ENCODE measurements at regions of chr17 and their contacts with region 1.

Region 1: DNA sequence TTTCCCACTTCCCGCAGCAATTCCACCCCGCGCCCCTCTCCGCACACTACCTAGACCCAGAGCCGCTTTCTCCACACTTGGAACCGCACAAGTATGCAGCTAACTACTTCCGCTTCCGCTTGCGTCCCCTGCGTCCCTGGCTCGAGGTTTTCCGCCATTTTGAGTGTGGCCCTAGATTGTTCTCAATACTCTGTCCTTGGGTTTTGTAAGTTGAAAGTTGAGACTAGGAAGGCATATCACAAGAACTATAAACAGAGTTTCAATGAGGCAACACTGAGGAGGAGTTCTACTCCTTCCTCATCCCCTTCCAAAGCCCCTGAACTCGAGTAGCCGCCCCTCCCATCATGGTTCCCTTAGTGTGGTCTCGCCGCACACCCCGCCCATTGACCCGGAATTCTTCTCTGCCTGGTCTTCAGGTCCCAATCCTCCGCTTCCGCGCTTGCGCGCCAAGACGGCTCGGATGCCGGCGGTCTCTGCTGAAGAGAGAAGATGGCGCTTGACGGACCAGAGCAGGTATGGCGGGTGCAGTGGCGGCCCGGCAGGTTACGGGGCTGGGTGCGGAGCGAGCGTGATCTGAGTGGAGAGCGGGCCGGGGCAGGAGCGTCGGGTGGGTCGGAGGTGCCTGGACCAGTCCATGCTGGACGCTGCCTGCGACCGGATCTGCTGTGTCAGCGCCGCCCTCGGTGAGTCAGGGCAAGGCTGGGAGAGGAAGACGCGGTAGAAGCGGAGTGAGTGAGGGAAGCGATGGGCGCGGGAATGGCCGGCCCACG is at the starts of genes FTSJ3 and PSMC5:
- DNase-seq: peak; percentile 96 to 98 (median 97)
- ATAC-seq: peak; percentile 93 to 97 (median 94)
- H3K4me3 ChIP-seq: peak within 1 kb of the TSS; percentile 63 to 96 (median 86)
- H3K27ac ChIP-seq: peak within 1 kb of the TSS; percentile 90 to 98 (median 96)
- H3K4me1 ChIP-seq: peaks cover 2 to 39% (median 25%) of the 10 kb centered on the region in 12 donors
- H3K27me3 ChIP-seq: no peaks in the 10 kb centered on the region
- CTCF ChIP-seq: peak in 10 of 12 donors; percentile 5 to 68 (median 44)
- POLR2A ChIP-seq: peak in 1 of 2 donors; percentile 85
- total RNA-seq, gene FTSJ3: 22.1 to 46.5 (median 25.7) TPM
- total RNA-seq, gene PSMC5: 64.7 to 143 (median 113) TPM

Region 2: DNA sequence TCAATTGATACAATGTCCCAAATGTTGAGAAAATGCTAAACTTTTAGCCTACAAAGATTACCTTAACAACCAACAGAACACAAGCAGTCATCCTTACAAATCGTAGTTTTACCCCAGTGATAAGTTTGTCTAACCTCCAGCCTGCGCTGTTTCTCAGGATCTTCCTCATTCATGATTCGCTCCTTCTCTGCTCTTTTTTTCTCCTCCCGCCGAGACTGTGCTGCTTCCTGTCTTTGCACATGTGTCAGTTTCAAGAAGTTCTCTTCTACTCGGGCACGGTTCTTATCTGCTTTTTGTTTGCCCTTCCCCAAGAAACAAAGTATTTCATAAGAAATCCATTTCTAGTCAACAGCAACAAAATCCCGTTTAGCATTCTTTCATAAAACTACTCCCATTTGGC is 75.4 kb before region 1 on chr17:
- intact Hi-C with region 1: no loop called
- DNase-seq: peak in 1 of 5 donors; percentile 32
- ATAC-seq: peak in 1 of 4 donors; percentile 34
- H3K4me3 ChIP-seq: no peak overlapping the region
- H3K27ac ChIP-seq: peak overlapping the region in 1 of 12 donors; percentile 75
- H3K4me1 ChIP-seq: peaks cover 0 to 12% (median 0%) of the 10 kb centered on the region in 12 donors
- H3K27me3 ChIP-seq: no peaks in the 10 kb centered on the region
- CTCF ChIP-seq: no peak
- POLR2A ChIP-seq: no peak

Region 3: GRCh38 chr17:63842540-63843386 is 15.6 kb after region 1 on chr17 and contains the start of gene SMARCD2:
- intact Hi-C with region 1: loop called in 3 of 10 experiments (anchors 1 kb)
- DNase-seq: peak; percentile 99 to 100 (median 99)
- ATAC-seq: peak; percentile 86 to 92 (median 88)
- H3K4me3 ChIP-seq: peak within 1 kb of the TSS; percentile 69 to 99 (median 93)
- H3K27ac ChIP-seq: peak within 1 kb of the TSS; percentile 84 to 98 (median 94)
- H3K4me1 ChIP-seq: peaks cover 19 to 52% (median 44%) of the 10 kb centered on the region in 12 donors
- H3K27me3 ChIP-seq: no peaks in the 10 kb centered on the region
- CTCF ChIP-seq: peak in 3 of 12 donors; percentile 4 to 10 (median 7)
- POLR2A ChIP-seq: peak in 1 of 2 donors; percentile 90
- total RNA-seq, gene SMARCD2: 11.3 to 40.9 (median 24.1) TPM

Region 4: GRCh38 chr17:64506576-64507477 is 679.6 kb after region 1 on chr17 and contains the start of gene CEP95:
- intact Hi-C with region 1: loop called in 1 of 10 experiments (anchors 10 kb)
- DNase-seq: peak; percentile 96 to 97 (median 96)
- ATAC-seq: peak; percentile 82 to 89 (median 84)
- H3K4me3 ChIP-seq: peak within 1 kb of the TSS; percentile 77 to 99 (median 88)
- H3K27ac ChIP-seq: peak within 1 kb of the TSS; percentile 96 to 100 (median 99)
- H3K4me1 ChIP-seq: peaks cover 14 to 53% (median 49%) of the 10 kb centered on the region in 12 donors
- H3K27me3 ChIP-seq: no peaks in the 10 kb centered on the region
- CTCF ChIP-seq: no peak
- POLR2A ChIP-seq: peak in 1 of 2 donors; percentile 41
- total RNA-seq, gene CEP95: 9.4 to 25.1 (median 13.1) TPM

Measured in heart left ventricle (tissue), 16 donors.